Activated T-helper 2 cell treated with anti-CD3 and anti-CD28 coated beads, Interferon-gamma antibody, Interleukin-2, Interleukin-4, amounts not matched to agents 10 μg/mL and 5 μg/mL and 100 μg/mL, durations not matched to agents 14 hours and 24 hours and 36 hours (primary cell): ENCODE measurements at regions of chr1 and their contacts with region 1.

Region 1: GRCh38 chr1:958823-959729 is at the start of gene NOC2L:
- DNase-seq: peak; percentile 91
- H3K4me3 Mint-ChIP-seq: peak within 1 kb of the TSS; percentile 99
- H3K27ac Mint-ChIP-seq: peak within 1 kb of the TSS; percentile 76
- H3K4me1 Mint-ChIP-seq: peaks cover 11% of the 10 kb centered on the region
- H3K27me3 Mint-ChIP-seq: no peaks in the 10 kb centered on the region
- total RNA-seq, gene NOC2L: 150 and 154 TPM in 2 replicates

Region 2: DNA sequence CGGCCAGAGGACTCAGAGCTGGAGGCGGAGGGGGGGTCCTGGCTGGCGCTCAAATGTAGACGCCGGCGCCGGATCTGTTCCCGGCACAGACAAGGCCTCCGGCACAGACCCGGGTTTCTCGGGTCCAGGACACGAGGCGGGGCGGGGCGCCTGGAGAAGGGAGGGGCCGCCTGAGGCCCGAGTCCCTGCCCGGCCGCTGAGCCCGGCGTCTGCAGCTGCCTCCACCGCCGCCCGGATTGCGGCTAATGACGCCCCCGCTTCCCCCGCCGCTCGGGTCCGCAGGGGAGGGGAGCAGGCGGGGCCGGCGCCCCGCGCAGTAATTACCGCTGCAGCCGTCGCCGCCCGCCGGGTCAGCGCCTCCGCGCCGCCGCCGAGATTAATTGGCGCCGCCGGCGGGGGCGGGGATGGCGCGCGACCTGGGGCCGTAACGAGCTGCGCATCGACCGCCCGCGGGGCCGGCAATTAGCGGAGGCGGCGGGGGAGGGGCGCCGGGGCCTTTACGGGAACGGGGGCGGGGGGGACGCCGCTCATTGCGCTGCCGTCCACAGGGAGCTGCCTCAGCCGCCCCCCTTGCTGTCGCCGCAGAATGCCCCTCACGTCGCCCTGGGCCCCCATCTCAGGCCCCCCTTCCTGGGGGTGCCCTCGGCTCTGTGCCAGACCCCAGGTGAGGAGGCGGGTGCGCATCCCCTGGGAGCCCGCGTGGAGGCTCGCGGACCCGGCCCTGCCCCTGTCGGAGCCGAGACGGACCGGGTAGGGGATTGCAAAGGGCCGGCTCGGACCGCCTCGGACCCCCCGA is 17.3 kb before region 1 on chr1:
- intact Hi-C with region 1: loop called (anchors 2 kb)
- DNase-seq: no peak
- H3K4me3 Mint-ChIP-seq: no peak overlapping the region
- H3K27ac Mint-ChIP-seq: no peak overlapping the region
- H3K4me1 Mint-ChIP-seq: peaks cover 3% of the 10 kb centered on the region
- H3K27me3 Mint-ChIP-seq: peaks cover 28% of the 10 kb centered on the region

Region 3: DNA sequence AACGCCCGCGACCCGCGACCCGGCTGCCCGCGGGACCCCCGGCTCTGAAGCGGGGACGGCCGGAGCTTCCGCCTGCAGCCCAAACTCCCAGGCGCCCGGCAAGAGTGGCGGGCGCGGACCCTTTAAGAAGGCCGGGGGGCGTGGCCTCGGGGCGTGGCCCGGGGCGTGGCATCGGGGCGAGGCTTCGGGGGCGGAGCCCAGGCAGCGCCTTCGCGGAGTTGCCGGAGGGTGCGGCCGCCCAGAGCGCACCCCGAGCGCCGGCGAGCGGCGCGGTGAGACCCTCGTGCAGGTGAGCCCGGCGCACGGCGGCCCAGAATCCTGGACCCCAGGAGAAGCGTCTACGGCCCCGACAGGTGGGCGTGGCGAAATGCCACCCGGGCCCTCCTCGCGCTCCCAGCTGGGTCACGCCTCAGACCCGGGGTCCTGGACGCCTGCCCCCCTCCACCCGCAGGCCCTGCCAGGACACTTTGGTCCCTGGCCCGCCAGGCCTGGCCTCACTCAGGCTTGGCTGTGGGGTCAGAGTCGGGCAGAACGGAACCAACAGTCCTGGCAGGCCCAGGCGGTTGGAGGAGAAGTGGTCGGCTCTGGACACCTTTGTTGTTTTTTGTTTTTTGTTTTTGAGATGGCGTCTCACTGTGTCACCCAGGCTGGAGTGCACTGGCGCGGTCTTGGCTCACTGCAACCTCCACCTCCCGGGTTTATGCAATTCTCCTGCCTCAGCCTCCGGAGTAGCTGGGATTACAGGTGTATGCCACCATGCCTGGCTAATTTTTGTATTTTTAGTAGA is 100.6 kb after region 1 on chr1:
- intact Hi-C with region 1: no loop called
- DNase-seq: peak; percentile 84
- H3K4me3 Mint-ChIP-seq: peak overlapping the region; percentile 80
- H3K27ac Mint-ChIP-seq: no peak overlapping the region
- H3K4me1 Mint-ChIP-seq: peaks cover 13% of the 10 kb centered on the region
- H3K27me3 Mint-ChIP-seq: peaks cover 28% of the 10 kb centered on the region